Ascending aorta (tissue), 2 donors: ENCODE measurements at regions of chr15 and their contacts with region 1.

Region 1: DNA sequence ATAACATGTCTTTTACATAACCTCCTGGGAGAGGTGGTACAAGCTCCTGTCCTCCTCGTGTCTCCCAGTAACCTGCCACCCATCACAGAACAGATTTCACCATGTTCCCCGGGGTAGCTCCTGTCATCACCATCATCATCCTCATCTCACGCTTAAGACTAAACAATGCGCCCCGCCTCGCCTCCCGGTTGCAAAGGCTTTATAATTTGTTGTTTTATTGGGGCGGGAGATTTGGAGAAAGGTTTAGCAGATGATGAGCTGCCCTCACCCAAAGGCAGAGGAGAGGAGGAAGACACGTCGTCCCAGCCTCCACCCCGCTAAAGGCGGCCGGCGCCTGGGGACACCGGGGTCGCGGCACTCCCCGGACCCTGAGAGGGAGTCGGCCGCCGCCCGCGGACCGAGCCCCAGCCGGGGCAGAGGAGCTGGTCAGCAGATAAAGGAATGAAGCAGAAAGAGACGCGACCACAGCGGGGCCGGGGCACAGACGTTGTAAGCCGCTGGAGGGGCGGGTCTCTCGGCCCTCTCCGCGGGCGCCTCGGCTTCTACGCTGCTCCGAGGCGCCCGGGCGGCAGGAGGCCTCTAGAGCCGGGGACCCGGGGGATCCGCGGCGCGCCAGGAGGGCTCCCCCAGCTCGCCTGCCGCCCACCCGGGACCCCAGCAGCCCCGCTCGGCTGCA is 589 bp downstream of the HERC1 start:
- DNase-seq: peak in 1 of 2 donors; percentile 69
- H3K4me3 ChIP-seq: peak overlapping the region; percentile 81 to 87
- H3K27ac ChIP-seq: peak overlapping the region; percentile 83
- H3K4me1 ChIP-seq: peaks cover 0 to 19% of the 10 kb centered on the region in 2 donors
- H3K27me3 ChIP-seq: no peaks in the 10 kb centered on the region
- CTCF ChIP-seq: no peak

Region 2: DNA sequence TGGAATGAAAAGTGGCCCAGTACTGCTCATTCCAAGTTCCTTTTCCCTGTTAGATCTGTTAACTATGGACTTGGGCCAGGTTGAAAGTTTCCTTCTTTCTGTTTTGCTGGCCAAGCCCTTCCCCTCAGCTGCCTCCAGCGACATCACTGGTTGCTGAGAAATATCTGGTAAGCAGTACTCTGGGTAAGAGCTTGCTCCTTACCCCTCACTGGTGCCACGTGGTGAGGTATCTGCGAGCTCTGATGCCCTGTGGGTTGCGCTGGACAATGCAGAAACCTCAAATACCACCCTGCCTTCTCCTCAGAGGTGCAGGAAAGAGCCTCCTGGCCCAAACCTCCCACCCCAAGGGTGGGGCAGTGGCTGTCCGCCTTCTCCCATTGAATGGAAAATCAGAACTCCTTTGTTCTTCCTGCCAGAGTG is 598.7 kb before region 1 on chr15:
- intact Hi-C with region 1: no loop called
- DNase-seq: peak; percentile 21 to 76
- H3K4me3 ChIP-seq: no peak overlapping the region
- H3K27ac ChIP-seq: peak overlapping the region; percentile 83 to 84
- H3K4me1 ChIP-seq: peaks cover 12 to 30% of the 10 kb centered on the region in 2 donors
- H3K27me3 ChIP-seq: no peaks in the 10 kb centered on the region
- CTCF ChIP-seq: no peak

Region 3: GRCh38 chr15:63362196-63362595 is 471.0 kb before region 1 on chr15:
- intact Hi-C with region 1: no loop called
- DNase-seq: no peak
- H3K4me3 ChIP-seq: no peak overlapping the region
- H3K27ac ChIP-seq: no peak overlapping the region
- H3K4me1 ChIP-seq: no peaks in the 10 kb centered on the region
- H3K27me3 ChIP-seq: no peaks in the 10 kb centered on the region
- CTCF ChIP-seq: no peak

Region 4: DNA sequence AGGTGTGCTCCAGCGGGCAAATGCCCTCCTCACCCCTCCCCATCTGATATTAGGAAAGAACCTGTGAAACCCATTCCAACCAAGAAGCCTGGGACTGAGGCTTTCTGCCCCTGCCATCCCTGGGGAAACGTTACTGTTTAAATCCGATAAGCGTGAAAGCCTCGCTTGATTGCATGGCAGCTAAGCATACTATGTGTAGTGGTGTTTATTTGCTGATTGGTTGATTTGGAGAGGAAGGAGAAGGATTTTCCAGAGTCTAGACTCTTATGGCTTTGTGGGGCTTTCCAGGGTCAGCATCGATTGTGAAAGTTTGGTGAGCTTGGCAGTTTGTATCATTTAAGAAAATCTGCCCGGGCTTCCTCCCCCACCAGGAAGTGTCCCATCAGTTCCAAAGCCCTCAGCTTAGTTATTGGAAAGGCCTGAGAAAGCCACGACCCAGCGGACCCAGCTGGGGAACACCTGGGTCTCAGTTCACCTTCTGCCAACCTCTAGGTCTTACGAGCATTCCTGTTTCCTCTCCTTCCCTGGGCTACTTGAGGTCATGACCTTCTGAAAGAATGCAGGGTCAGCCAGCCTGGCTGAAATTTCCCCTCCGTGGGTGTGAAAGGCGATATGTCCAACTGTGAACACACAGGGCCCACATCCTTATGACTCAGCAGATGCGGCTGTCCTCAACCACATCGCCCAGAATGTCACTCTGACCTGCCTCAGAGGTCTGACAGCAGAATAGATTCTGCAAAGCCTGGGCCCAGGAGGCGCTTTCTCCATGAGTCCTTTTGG is 63.4 kb after region 1 on chr15:
- intact Hi-C with region 1: no loop called
- DNase-seq: no peak
- H3K4me3 ChIP-seq: no peak overlapping the region
- H3K27ac ChIP-seq: no peak overlapping the region
- H3K4me1 ChIP-seq: no peaks in the 10 kb centered on the region
- H3K27me3 ChIP-seq: no peaks in the 10 kb centered on the region
- CTCF ChIP-seq: no peak

Region 5: DNA sequence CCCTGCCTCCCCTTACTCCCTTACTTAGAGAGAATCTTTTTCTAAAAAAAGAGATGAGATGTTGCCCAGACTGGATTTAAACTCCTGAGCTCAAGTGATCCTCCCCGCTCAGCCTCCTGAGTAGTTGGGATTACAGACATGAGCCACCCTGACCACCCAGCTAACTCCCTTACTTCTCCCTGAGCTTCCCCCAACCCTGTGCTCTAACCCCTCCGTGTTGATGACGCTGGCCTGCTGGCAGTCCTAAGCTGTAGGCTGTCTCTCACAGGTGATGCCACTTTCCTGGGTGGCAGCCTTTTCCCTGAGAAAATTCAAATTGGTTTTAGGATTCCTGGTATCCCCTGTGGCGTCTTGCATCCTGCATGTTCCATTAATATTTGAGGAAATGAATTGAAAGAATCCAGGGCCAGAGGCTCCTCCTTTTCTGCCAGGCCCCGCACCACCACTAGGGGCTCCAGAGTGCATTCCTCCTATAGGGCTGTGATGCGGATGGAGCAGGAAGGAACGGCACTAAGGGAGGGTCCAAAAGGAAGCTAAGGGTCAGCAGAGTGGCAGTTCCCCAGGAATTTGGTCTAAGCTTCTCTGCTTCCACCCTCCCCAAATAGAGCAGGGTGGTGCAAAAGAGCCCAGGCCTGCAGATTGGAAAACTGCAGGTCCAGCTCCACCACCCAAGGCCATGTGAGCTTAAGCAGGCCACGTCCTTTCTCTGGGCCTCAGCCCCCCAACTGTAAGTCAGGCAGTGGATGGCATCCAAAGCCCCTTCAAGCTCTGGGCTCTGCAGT is 112.0 kb after region 1 on chr15:
- intact Hi-C with region 1: loop called (anchors 10 kb)
- DNase-seq: peak in 1 of 2 donors; percentile 78
- H3K4me3 ChIP-seq: no peak overlapping the region
- H3K27ac ChIP-seq: no peak overlapping the region
- H3K4me1 ChIP-seq: peaks cover 1 to 12% of the 10 kb centered on the region in 2 donors
- H3K27me3 ChIP-seq: no peaks in the 10 kb centered on the region
- CTCF ChIP-seq: peak; percentile 66 to 94 (median 91)

Region 6: DNA sequence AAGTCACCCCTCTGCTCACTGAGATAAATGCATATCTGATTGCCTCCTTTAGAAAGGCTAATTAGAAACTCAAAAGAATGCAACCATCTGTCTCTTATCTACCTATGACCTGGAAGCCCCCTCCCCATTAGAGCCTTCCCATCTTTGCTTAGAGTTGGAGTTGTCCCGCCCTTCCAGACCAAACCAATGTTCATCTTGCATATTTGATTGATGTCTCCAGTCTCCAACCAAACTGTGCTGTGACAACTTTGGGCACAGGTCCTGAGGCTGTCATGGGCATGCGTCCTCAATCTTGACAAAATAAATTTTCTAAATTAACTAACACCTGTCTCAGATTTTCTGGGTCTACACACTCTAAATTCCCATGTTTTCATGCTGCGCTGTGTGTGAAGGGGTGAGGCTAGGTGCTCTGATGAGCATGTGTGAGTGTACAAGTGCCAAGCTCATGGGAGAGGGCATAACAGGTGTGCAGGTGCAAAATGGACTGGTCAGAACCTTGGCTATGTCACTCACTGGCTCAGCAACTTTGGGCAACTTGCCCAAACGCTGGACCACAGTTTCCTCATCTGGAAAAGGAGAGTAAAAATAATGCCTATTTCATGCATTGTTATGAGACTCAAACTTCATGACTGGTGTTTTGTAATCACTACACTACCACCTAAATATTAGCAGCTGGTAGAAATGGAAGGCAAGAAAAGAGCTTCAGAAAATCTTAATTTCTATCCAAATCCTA is 205.9 kb after region 1 on chr15:
- intact Hi-C with region 1: no loop called
- DNase-seq: no peak
- H3K4me3 ChIP-seq: no peak overlapping the region
- H3K27ac ChIP-seq: no peak overlapping the region
- H3K4me1 ChIP-seq: no peaks in the 10 kb centered on the region
- H3K27me3 ChIP-seq: no peaks in the 10 kb centered on the region
- CTCF ChIP-seq: no peak